Panc1 (cell line): ENCODE measurements at regions of chr22 and their contacts with region 1.

Region 1: DNA sequence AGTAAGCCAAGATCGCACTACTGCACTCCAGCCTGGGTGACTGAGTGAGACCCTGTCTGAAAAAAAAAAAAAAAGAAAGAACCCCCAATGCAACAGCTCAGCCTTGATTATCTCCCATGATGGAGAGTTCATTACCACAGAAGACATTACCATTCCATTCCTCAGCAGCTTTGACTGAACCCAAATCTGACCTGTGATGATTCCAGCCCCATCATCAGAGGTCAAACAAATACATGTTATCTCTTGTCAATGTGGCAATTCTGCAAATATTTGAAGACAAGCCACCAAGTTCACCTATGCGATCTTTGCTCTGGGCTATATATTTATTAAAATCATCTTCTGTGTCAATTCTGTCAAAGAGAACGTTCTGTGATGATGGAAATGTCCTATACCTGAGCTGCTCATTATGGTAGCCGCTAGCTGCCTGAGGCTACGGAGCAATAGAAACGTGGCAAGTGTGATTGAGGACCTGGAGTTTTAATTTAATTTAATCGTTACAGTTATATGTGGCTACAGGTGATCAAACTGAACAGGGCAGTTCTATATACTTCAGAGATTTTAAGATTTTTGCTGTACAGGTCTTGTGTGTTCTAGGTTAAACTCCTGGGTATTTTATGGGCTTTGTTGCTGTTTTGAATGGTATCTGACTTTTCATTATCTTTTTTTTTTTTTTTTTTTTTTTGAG is 7.9 kb downstream of the SEC14L4 start:
- DNase-seq: no peak
- ATAC-seq: no peak
- H3K4me3 ChIP-seq: no peak overlapping the region
- H3K27ac ChIP-seq: no peak overlapping the region
- H3K4me1 ChIP-seq: no peaks in the 10 kb centered on the region
- H3K27me3 ChIP-seq: no peaks in the 10 kb centered on the region
- CTCF ChIP-seq: no peak

Region 2: DNA sequence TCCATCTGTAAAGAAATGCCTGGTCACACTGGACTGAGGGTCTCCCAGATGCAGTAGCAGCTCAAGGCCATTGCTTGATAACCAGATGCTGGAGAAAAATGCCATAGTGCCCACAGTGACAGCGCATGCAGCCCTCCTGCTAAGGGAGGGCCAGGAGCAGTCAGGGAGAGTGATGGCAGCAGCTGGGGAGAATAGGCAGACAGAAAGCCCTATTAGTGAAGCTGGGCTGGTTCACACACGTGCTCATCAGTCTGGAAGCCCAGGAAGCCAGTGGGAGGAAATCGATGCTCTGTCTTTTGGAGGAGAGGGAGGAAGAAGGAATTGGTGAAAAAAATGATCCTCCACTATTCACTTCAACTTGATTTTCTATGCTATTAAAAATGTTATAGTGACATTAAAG is 280.0 kb after region 1 on chr22:
- CTCF ChIA-PET with region 1: interaction called, 11 read pairs
- POLR2A ChIA-PET with region 1: no interaction called
- in situ Hi-C with region 1: no loop called
- intact Hi-C with region 1: no loop called
- DNase-seq: no peak
- ATAC-seq: no peak
- H3K4me3 ChIP-seq: no peak overlapping the region
- H3K27ac ChIP-seq: no peak overlapping the region
- H3K4me1 ChIP-seq: no peaks in the 10 kb centered on the region
- H3K27me3 ChIP-seq: no peaks in the 10 kb centered on the region
- CTCF ChIP-seq: no peak